ENCODE measurements at regions of chr1 and their contacts with region 1.

Region 1: DNA sequence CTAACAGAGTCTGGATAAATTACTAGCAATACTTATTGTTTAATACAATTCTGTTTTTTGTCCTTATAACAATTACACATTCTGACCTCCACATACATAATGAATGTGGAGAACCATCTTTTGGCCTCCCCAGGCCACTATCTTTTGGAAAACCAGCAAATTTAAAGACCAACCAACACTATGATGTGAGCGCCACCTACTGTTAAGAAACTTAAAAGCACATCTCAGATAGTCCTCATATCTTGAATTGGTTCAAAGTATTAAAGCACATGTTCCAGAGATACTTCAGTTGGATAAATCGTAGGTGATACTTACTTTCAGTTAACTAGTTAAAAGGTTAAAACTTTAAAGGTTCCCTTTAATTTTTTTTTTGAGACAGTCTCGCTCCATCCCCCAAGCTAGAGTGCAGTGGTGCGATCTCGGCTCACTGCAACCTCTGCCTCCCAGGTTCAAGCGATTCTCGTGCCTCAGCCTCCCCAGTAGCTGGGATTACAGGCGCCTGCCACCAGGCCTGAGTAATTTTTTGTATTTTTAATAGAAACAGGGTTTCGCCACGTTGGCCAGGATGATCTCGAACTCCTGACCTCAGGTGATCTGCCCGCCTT is 29.3 kb upstream of the USP1 start:
- DNase-seq: peak in 6 of 9 donors; percentile 30 to 64 (median 50)
- ATAC-seq: peak; percentile 70
- H3K4me3 ChIP-seq: no peak overlapping the region
- H3K4me3 Mint-ChIP-seq: no peak overlapping the region
- H3K27ac ChIP-seq: no peak overlapping the region
- H3K27ac Mint-ChIP-seq: peak overlapping the region in 1 of 9 donors; percentile 1
- H3K4me1 ChIP-seq: no peaks in the 10 kb centered on the region
- H3K4me1 Mint-ChIP-seq: no peaks in the 10 kb centered on the region
- H3K27me3 ChIP-seq: no peaks in the 10 kb centered on the region
- H3K27me3 Mint-ChIP-seq: peaks cover 0 to 6% (median 0%) of the 10 kb centered on the region in 5 donors

Region 2: DNA sequence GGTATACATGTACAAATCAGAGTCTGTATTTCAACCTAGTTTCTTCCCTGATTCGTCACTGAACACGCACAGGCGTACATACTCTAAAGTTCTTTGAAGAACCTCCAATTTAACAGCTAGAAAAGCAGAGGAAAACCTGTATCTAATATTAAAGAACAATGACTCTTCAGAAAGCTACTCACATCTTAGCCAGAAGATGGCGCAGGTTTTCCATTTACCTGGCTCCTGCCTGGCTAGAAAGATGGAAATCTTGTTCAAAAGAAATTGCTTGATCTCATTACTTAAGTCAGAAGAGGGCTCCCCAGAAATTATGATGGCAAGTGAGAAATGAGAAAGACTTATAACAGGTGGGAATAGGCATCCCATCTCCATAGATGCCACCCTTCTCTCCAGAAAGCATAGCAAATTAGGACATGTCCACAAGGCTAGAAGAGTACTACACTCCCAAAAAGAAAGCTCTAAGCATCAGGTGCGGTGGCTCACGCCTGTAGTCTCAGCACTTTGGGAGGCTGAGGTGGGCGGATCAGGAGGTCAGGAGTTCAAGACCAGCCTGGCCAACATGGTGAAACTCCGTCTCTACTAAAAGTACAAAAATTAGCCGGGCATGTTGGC is 231.8 kb before region 1 on chr1:
- CTCF ChIA-PET with region 1: interaction called, 67 read pairs
- POLR2A ChIA-PET with region 1: no interaction called
- intact Hi-C with region 1: loop called in 1 of 2 experiments (anchors 1 kb)
- DNase-seq: peak in 7 of 9 donors; percentile 15 to 57 (median 49)
- ATAC-seq: peak; percentile 46
- H3K4me3 ChIP-seq: no peak overlapping the region
- H3K4me3 Mint-ChIP-seq: no peak overlapping the region
- H3K27ac ChIP-seq: no peak overlapping the region
- H3K27ac Mint-ChIP-seq: no peak overlapping the region
- H3K4me1 ChIP-seq: no peaks in the 10 kb centered on the region
- H3K4me1 Mint-ChIP-seq: no peaks in the 10 kb centered on the region
- H3K27me3 ChIP-seq: no peaks in the 10 kb centered on the region
- H3K27me3 Mint-ChIP-seq: peaks cover 0 to 16% (median 5%) of the 10 kb centered on the region in 5 donors

Measured in naive thymus-derived CD4-positive, alpha-beta T cell (primary cell).